HCT116 (cell line): ENCODE measurements at regions of chr19 and their contacts with region 1.

Region 1: GRCh38 chr19:45817010-45817724 is 2.1 kb upstream of the RSPH6A start:
- DNase-seq: peak; percentile 90
- ATAC-seq: peak; percentile 93
- H3K4me3 ChIP-seq: no peak overlapping the region
- H3K27ac ChIP-seq: peak overlapping the region; percentile 50; the same call in 1 of the 2 replicates
- H3K4me1 ChIP-seq: peaks cover 3 to 11% of the 10 kb centered on the region in 2 experiments; a peak in 3 of 4 replicates
- H3K27me3 ChIP-seq: no peaks in the 10 kb centered on the region
- CTCF ChIP-seq: peak; percentile 99
- POLR2A ChIP-seq: no peak
- RAD21 ChIP-seq: peak; percentile 87

Region 2: DNA sequence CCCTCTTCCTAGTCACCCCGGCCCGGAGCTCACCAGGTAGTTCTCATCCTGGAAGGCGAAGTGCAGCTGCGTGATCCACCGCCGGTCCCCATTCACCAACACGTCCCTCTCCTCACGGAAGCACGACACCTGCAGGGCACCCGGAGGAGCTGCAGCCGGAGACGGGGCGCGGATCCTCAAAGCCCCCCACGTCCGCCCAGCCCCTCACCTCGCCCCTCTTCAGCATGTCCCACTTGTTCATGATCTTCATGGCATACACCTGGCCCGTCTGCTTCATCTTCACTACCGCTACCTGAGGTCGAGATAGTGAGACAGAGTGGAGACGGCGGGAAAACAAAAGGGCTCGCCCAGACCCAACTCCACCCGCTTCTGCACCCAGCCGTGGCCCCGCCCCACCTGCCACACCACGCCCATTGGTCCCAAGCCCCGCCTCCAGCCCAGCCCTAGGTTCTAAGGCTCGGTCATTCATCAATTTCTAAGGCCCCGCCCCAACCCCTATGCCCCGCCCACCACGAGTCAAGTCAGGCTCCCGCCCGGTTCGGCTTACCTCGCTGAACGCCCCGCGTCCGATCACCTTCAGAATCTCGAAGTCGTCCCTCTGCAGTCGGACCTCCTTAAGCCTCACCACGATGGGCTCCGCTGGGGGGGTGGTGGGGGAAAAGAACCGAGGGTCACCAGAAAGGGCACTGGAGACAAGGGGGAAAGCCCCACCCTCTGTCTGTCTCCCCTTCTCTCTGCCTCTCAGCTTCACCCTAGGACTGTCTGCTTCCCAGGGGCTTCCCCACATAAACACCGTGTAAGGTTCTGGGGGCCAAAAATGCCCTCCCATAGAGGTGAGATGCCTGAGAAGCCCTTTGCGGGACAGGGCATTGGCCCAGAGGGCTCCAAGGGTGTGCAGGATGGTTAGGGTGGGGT is 37.7 kb before region 1 on chr19:
- CTCF ChIA-PET with region 1: interaction called, 10 read pairs
- POLR2A ChIA-PET with region 1: no interaction called
- RAD21 ChIA-PET with region 1: no interaction called
- intact Hi-C with region 1: no loop called
- DNase-seq: peak; percentile 87
- ATAC-seq: peak; percentile 85
- H3K4me3 ChIP-seq: peak overlapping the region; percentile 53 to 59
- H3K27ac ChIP-seq: peak overlapping the region; percentile 91
- H3K4me1 ChIP-seq: peaks cover 45 to 60% of the 10 kb centered on the region in 2 experiments
- H3K27me3 ChIP-seq: no peaks in the 10 kb centered on the region
- CTCF ChIP-seq: peak in 2 of 3 experiments; percentile 83 to 90; a peak in 5 of 6 replicates
- POLR2A ChIP-seq: peak; percentile 30
- RAD21 ChIP-seq: peak; percentile 57; the same call in 1 of the 2 replicates

Region 3: GRCh38 chr19:45798995-45799517 is 18.1 kb before region 1 on chr19:
- CTCF ChIA-PET with region 1: interaction called, 21 read pairs
- POLR2A ChIA-PET with region 1: no interaction called
- RAD21 ChIA-PET with region 1: interaction called in 1 of 2 experiments, 6 read pairs
- intact Hi-C with region 1: no loop called
- DNase-seq: no peak
- ATAC-seq: peak; percentile 92
- H3K4me3 ChIP-seq: no peak overlapping the region
- H3K27ac ChIP-seq: no peak overlapping the region
- H3K4me1 ChIP-seq: peaks cover 0 to 18% of the 10 kb centered on the region in 2 experiments; a peak in 2 of 4 replicates
- H3K27me3 ChIP-seq: no peaks in the 10 kb centered on the region
- CTCF ChIP-seq: peak; percentile 79 to 85 (median 81)
- POLR2A ChIP-seq: no peak
- RAD21 ChIP-seq: peak; percentile 79

Region 4: GRCh38 chr19:45804140-45804958 is 12.8 kb before region 1 on chr19:
- CTCF ChIA-PET with region 1: interaction called, 21 read pairs
- POLR2A ChIA-PET with region 1: no interaction called
- RAD21 ChIA-PET with region 1: interaction called in 1 of 2 experiments, 6 read pairs
- intact Hi-C with region 1: no loop called
- DNase-seq: no peak
- ATAC-seq: no peak
- H3K4me3 ChIP-seq: no peak overlapping the region
- H3K27ac ChIP-seq: no peak overlapping the region
- H3K4me1 ChIP-seq: peaks cover 0 to 15% of the 10 kb centered on the region in 2 experiments; a peak in 2 of 4 replicates
- H3K27me3 ChIP-seq: no peaks in the 10 kb centered on the region
- CTCF ChIP-seq: no peak
- POLR2A ChIP-seq: no peak
- RAD21 ChIP-seq: no peak

Region 5: GRCh38 chr19:45827459-45828093 is 10.4 kb after region 1 on chr19:
- CTCF ChIA-PET with region 1: interaction called, 17 read pairs
- POLR2A ChIA-PET with region 1: interaction called, 3 read pairs
- RAD21 ChIA-PET with region 1: no interaction called
- intact Hi-C with region 1: no loop called
- DNase-seq: no peak
- ATAC-seq: peak; percentile 31; the same call in 1 of the 2 replicates
- H3K4me3 ChIP-seq: no peak overlapping the region
- H3K27ac ChIP-seq: no peak overlapping the region
- H3K4me1 ChIP-seq: no peaks in the 10 kb centered on the region
- H3K27me3 ChIP-seq: no peaks in the 10 kb centered on the region
- CTCF ChIP-seq: no peak
- POLR2A ChIP-seq: no peak
- RAD21 ChIP-seq: no peak

Region 6: DNA sequence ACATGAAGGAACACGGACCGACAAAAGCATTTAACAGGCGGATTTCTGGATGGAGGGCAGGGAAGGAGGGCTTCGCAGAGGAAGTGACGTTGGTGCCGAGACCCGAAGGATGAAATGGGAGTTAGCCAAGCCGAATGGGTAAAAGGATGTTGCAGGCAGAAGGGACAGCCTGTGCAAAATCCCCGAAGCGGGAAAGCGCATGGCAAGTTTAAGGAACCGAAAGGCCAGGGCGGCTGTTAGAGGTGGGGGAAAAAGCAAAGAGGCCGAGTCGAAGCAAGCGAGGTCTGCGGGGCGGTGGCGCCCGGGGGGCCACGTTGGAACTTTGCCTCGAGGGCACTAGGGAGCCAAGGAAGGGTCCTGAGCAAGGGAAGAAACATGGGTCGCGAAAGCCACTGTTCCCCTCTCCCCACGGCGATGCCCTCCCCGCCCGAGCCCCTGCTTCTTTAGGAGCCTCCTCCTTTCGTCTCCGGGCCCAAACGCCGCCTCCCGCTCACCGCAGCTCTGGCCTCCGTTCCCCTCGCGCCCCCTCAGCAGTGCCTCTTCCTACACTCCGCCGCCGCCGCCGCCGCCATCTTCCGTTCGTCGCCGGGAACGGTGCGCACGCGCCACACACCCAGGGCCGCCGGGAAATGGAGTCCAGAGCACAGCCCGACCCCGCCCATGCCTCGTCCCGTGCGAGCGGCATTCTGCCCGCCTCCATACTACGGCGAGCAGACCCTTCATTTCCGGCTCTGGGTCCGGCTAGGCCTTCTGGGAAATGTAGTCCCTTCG is 45.6 kb after region 1 on chr19 and contains the start of gene SYMPK:
- CTCF ChIA-PET with region 1: interaction called, 24 read pairs
- POLR2A ChIA-PET with region 1: interaction called, 3 read pairs
- RAD21 ChIA-PET with region 1: interaction called in 1 of 2 experiments, 4 read pairs
- intact Hi-C with region 1: no loop called
- DNase-seq: peak; percentile 96
- ATAC-seq: peak; percentile 91
- H3K4me3 ChIP-seq: peak within 1 kb of the TSS; percentile 91 to 93
- H3K27ac ChIP-seq: peak within 1 kb of the TSS; percentile 91
- H3K4me1 ChIP-seq: peaks cover 11 to 35% of the 10 kb centered on the region in 2 experiments
- H3K27me3 ChIP-seq: no peaks in the 10 kb centered on the region
- CTCF ChIP-seq: no peak
- POLR2A ChIP-seq: peak; percentile 52
- RAD21 ChIP-seq: no peak
- total RNA-seq, gene SYMPK: 117 TPM

Region 7: DNA sequence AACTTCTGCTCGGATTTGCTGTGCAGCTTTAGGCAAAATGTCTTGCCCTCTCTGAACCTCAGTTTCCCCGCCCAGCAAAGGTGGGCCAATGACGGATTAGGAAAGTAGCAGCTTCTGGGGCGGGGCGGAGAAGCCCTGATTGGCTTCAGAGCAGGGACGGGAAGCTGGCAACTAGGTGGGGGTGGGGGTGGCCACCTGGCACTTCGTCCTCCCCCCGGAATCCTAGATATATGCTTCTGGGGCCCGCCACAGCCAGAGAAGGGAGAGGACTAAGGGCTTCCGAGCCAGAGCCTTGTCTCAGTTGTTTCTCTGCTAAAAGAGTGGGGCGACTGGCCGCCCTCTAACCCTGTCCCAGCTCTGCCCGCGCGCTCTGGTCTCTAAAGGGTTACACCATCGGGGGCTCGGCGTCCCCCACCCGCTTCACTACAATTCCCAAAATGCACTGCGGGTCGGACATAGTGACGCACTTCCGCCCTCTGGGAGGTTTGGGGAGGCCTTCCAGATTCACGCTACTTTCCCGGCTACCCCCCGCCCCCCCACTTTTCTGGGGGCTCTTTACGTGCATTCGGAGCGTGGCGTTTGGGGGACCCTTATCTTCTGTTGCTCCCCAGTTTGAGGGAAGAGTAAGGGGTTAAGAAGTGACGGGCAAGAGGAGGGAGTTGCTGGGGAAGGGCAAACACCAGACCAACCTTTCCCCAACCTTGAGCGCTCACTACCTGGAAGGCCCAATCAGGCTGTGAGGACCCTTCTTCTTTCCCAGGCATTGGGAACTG is 69.4 kb after region 1 on chr19:
- CTCF ChIA-PET with region 1: interaction called, 15 read pairs
- POLR2A ChIA-PET with region 1: no interaction called
- RAD21 ChIA-PET with region 1: no interaction called
- intact Hi-C with region 1: loop called (anchors 1 kb)
- DNase-seq: peak; percentile 90
- ATAC-seq: peak; percentile 69
- H3K4me3 ChIP-seq: peak overlapping the region; percentile 71 to 75
- H3K27ac ChIP-seq: peak overlapping the region; percentile 91
- H3K4me1 ChIP-seq: peaks cover 18 to 39% of the 10 kb centered on the region in 2 experiments
- H3K27me3 ChIP-seq: no peaks in the 10 kb centered on the region
- CTCF ChIP-seq: no peak
- POLR2A ChIP-seq: no peak
- RAD21 ChIP-seq: no peak

Region 8: DNA sequence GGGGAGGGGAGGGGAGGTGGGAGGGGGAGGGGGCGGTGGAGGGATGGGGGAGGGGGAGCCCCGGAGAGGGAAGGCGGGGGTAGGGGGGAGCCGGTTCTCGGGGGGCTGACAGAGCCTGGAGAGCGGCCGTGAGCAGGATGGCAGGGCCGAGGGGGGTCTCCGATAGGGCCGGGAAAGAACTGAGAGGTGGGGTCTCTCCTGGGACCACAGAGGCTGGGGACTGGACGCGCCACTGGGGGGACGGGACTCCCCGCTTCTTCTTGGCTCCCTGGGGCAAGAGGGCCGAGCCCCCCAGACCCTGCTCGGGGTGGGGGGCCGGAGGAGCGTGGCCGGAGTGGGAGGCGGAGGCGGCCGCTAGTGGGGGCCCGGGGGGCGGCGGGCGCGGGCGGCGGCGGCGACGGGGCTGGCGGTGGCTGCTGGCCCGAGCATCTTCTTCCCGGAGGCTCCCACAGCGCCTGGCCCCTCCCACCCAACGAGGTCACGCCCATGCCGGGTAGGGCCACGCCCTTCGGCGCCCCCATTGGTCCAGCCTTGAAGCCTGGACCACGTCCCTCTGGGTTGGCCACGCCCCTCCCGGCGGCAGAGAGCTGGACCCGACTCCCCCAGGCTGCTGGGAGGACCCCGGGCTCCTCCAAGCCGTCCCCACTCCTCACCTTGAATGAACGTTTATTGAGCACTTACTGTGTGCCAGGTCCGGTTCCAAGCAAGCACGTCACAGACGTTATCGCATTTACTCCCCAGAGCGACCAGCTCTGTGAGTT is 156.6 kb after region 1 on chr19 and contains the start of gene NOVA2:
- CTCF ChIA-PET with region 1: no interaction called
- POLR2A ChIA-PET with region 1: no interaction called
- RAD21 ChIA-PET with region 1: no interaction called
- intact Hi-C with region 1: no loop called
- DNase-seq: peak; percentile 69
- ATAC-seq: peak; percentile 99
- H3K4me3 ChIP-seq: peak within 1 kb of the TSS; percentile 43 to 50
- H3K27ac ChIP-seq: no peak within 1 kb of the TSS
- H3K4me1 ChIP-seq: peaks cover 0 to 18% of the 10 kb centered on the region in 2 experiments; a peak in 3 of 4 replicates
- H3K27me3 ChIP-seq: no peaks in the 10 kb centered on the region; the same call in 1 of the 2 replicates
- CTCF ChIP-seq: no peak
- POLR2A ChIP-seq: no peak
- RAD21 ChIP-seq: no peak
- total RNA-seq, gene NOVA2: 2.5 TPM